Aorta (tissue), 5 donors: ENCODE measurements at regions of chr2 and their contacts with region 1.

Region 1: GRCh38 chr2:210224941-210225672 is at the start of gene ACADL:
- DNase-seq: peak; percentile 82 to 92
- ATAC-seq: peak; percentile 89
- H3K4me3 ChIP-seq: peak within 1 kb of the TSS; percentile 64 to 87
- H3K27ac ChIP-seq: peak within 1 kb of the TSS; percentile 83 to 98
- H3K4me1 ChIP-seq: peaks cover 0 to 6% of the 10 kb centered on the region in 2 donors
- H3K27me3 ChIP-seq: no peaks in the 10 kb centered on the region
- total RNA-seq, gene ACADL: 32.8 to 50.3 TPM

Region 2: DNA sequence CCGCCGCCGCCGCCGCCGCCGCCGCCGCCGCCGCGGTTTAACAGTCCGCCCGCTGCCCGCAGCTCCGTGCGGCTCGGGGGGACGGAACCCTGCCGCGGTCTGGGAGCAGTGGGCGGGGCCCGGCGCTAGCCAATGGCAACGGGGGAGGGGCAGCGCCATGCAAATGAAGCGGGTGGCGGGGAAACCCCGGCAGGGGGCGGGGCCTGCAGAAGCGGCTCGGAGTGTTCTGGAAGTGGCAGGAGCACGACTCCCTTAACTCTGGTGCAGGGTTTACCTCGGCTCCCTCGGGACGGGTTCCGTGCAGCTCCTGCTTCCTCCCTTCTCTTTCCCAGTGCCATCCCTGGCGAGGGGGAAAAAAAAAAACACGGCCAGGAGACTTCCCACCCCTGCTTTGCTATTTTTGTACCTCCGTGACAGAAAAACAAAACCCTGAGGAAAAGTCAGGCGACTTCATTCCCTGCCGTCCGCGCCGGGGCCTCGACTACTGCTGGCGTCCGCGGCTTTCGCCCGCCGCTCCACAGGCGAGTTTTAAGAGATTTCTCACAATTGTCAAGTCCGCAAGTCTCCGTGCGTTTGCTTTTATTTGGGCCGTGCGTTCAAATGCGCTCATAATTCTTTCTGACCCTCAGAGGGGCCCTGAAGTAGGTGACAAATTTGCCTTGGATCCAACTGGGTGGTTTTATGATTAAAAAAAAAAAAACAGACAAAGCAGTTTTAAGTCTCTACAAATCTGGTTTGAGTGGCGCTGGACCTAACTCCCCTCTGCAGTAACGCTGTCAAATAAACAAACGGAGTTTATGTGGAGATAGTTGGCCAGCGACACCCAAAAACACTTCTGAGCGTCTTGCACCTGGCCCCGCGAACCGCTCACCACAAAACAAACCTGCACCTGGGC is 53.6 kb before region 1 on chr2 and contains the start of gene KANSL1L:
- intact Hi-C with region 1: loop called in 1 of 2 experiments (anchors 5 kb)
- DNase-seq: peak; percentile 99 to 100
- ATAC-seq: peak; percentile 95
- H3K4me3 ChIP-seq: peak within 1 kb of the TSS; percentile 73 to 99
- H3K27ac ChIP-seq: peak within 1 kb of the TSS; percentile 85 to 99
- H3K4me1 ChIP-seq: no peaks in the 10 kb centered on the region
- H3K27me3 ChIP-seq: no peaks in the 10 kb centered on the region
- total RNA-seq, gene KANSL1L: 42.4 to 44.1 TPM

Region 3: GRCh38 chr2:210195101-210195852 is 29.8 kb before region 1 on chr2:
- intact Hi-C with region 1: no loop called
- DNase-seq: no peak
- ATAC-seq: no peak
- H3K4me3 ChIP-seq: no peak overlapping the region
- H3K27ac ChIP-seq: no peak overlapping the region
- H3K4me1 ChIP-seq: no peaks in the 10 kb centered on the region
- H3K27me3 ChIP-seq: no peaks in the 10 kb centered on the region

Region 4: GRCh38 chr2:210299866-210300373 is 74.8 kb after region 1 on chr2:
- intact Hi-C with region 1: no loop called
- DNase-seq: no peak
- ATAC-seq: no peak
- H3K4me3 ChIP-seq: no peak overlapping the region
- H3K27ac ChIP-seq: no peak overlapping the region
- H3K4me1 ChIP-seq: no peaks in the 10 kb centered on the region
- H3K27me3 ChIP-seq: no peaks in the 10 kb centered on the region

Region 5: DNA sequence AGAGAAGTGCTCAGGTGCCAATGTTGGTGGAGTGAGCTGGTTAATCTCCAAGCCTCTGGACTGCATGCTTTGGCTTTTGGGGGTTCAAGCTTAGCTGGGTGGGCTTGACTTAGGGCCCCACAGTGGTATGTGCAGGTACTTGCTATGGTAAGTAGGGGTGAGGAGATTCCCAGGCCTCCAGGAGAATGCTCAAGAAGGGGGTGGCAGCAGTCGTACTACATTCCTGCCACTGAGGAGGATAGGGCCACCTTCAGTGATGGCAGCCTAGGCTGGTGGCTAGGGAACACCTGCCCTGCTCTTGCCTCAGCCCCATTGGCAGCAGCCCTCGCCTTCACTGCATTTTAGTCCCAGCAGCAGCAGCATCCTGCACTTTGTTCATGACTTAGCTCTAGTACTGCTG is 145.5 kb after region 1 on chr2:
- intact Hi-C with region 1: no loop called
- DNase-seq: no peak
- ATAC-seq: no peak
- H3K4me3 ChIP-seq: no peak overlapping the region
- H3K27ac ChIP-seq: no peak overlapping the region
- H3K4me1 ChIP-seq: no peaks in the 10 kb centered on the region
- H3K27me3 ChIP-seq: no peaks in the 10 kb centered on the region

Region 6: DNA sequence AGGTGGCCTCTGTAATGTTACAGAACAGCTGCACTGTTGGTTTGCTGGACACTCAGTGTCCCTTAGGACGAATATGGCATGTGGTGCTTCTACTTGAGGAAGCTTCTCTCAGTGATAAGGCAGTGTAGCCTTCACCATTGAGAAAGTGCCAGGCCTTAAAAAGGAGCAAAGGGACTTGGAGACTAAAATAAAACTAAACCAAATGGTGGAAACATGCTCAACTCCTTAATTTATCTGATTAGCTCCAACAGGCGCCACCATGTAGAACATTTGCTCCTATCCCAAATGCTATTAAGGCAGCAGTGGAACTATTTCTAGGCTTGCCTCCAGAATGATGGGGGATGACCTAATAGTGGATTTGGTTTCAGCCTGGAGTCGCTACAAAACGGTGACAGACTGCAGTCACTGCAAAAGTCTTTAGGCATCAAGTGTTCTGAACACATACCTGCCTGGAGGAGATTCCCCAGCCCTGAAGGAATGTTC is 167.4 kb after region 1 on chr2:
- intact Hi-C with region 1: no loop called
- DNase-seq: no peak
- ATAC-seq: no peak
- H3K4me3 ChIP-seq: no peak overlapping the region
- H3K27ac ChIP-seq: no peak overlapping the region
- H3K4me1 ChIP-seq: no peaks in the 10 kb centered on the region
- H3K27me3 ChIP-seq: no peaks in the 10 kb centered on the region

Region 7: GRCh38 chr2:210476194-210477128 is 251.4 kb after region 1 on chr2 and contains the start of gene LANCL1:
- intact Hi-C with region 1: loop called (anchors 5 to 10 kb)
- DNase-seq: peak; percentile 94 to 97
- ATAC-seq: peak; percentile 100
- H3K4me3 ChIP-seq: peak within 1 kb of the TSS; percentile 80 to 88
- H3K27ac ChIP-seq: peak within 1 kb of the TSS; percentile 18 to 85
- H3K4me1 ChIP-seq: no peaks in the 10 kb centered on the region
- H3K27me3 ChIP-seq: no peaks in the 10 kb centered on the region
- total RNA-seq, gene LANCL1: 33.3 to 39.3 TPM